ENCODE measurements at regions of chr6 and their contacts with region 1.

Region 1: GRCh38 chr6:104955927-104956730 is 778 bp upstream of the LIN28B start:
- DNase-seq: peak; percentile 77 to 94 (median 80)
- ATAC-seq: peak; percentile 41
- H3K4me3 ChIP-seq: peak overlapping the region; percentile 56
- H3K27ac ChIP-seq: peak overlapping the region; percentile 98
- H3K4me1 ChIP-seq: peaks cover 6 to 8% of the 10 kb centered on the region in 2 experiments; a peak in 4 of 5 replicates
- H3K27me3 ChIP-seq: no peaks in the 10 kb centered on the region
- CTCF ChIP-seq: peak; percentile 10 to 36 (median 22); a peak in 2 of 6 replicates
- EP300 ChIP-seq: peak; percentile 76
- POLR2A ChIP-seq: peak; percentile 71
- RAD21 ChIP-seq: peak; percentile 22 to 44; a peak in 3 of 4 replicates

Region 2: DNA sequence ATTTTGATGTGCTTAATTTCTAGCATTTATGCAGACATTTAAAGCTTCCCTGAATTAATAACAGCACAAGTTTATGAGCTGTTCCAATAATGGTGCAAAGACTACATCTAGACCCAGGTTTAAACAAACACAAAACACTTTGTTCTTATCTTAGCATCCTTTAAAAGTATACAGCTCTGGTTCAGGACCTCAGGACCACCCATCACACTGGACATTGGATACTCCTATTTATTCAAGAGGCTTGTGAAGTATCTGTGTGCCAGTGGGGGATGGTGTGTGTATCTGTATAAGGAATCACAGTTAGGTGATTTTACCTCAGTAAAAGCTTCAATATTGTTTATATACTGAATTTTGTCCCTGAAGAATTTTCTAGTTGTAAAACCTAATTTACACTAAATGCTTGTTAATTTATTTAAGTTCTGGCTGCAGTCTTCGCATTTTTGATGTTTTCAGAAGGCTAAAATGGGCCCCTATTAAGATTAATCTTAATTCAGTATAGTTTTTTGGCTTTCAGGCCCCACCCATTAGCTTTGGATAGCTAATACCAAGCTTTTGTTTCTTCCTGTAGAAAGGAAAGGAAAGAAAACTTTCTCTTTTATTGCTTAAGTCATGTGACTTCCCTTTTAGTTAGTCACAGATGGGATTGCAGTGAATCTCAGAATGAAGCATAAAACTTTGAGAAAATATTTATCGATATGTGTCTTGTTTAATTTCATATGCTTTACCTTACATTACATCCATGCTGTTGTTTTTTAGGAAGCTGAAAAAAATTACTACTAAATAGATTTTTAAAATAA is 13.9 kb after region 1 on chr6:
- CTCF ChIA-PET with region 1: no interaction called
- POLR2A ChIA-PET with region 1: interaction called, 67 read pairs
- in situ Hi-C with region 1: no loop called
- intact Hi-C with region 1: loop called (anchors 2 kb)
- DNase-seq: peak in 1 of 4 experiments; percentile 8
- ATAC-seq: peak; percentile 62
- H3K4me3 ChIP-seq: no peak overlapping the region
- H3K27ac ChIP-seq: peak overlapping the region; percentile 48; the same call in 2 of the 3 replicates
- H3K4me1 ChIP-seq: peaks cover 0 to 13% of the 10 kb centered on the region in 2 experiments; a peak in 1 of 5 replicates
- H3K27me3 ChIP-seq: no peaks in the 10 kb centered on the region
- CTCF ChIP-seq: no peak
- EP300 ChIP-seq: no peak
- POLR2A ChIP-seq: no peak
- RAD21 ChIP-seq: no peak

Region 3: DNA sequence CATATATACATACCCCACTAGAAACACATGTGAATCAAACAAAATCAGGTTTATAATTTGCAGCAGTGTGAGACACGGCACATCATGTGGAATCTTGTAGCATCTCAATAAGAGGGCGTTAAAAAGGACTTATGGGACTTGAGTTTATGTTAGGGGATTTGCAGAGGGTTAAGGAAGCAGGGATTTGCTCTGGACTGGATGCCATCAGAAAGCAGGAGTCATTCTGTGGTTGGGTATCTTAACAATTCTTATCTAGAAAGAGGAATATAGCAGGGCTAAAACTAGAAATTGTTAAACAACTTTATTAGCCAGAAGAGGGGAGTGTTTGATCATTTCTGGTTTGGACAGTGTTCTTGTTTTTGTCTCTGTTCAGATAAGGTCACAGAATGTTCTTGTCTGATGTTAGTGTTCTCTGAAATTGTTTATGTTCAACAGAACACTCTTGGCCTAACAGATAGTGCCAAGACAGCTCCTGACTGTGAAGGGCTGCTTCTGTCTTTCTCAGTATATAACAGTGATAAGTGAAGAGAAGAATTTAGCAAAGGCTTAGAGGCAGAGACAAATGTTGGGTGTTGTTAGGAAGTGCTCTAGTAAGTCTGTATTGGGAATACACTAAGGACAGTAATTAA is 40.0 kb after region 1 on chr6:
- CTCF ChIA-PET with region 1: no interaction called
- POLR2A ChIA-PET with region 1: no interaction called
- in situ Hi-C with region 1: no loop called
- intact Hi-C with region 1: loop called (anchors 5 kb)
- DNase-seq: peak in 2 of 4 experiments; percentile 21 to 44
- ATAC-seq: peak; percentile 88
- H3K4me3 ChIP-seq: no peak overlapping the region
- H3K27ac ChIP-seq: peak overlapping the region; percentile 57; the same call in 2 of the 3 replicates
- H3K4me1 ChIP-seq: peaks cover 0 to 3% of the 10 kb centered on the region in 2 experiments; a peak in 1 of 5 replicates
- H3K27me3 ChIP-seq: no peaks in the 10 kb centered on the region
- CTCF ChIP-seq: peak in 1 of 3 experiments; percentile 53; a peak in 2 of 6 replicates
- EP300 ChIP-seq: no peak; the same call in 1 of the 2 replicates
- POLR2A ChIP-seq: no peak
- RAD21 ChIP-seq: peak; percentile 69 to 79

Region 4: DNA sequence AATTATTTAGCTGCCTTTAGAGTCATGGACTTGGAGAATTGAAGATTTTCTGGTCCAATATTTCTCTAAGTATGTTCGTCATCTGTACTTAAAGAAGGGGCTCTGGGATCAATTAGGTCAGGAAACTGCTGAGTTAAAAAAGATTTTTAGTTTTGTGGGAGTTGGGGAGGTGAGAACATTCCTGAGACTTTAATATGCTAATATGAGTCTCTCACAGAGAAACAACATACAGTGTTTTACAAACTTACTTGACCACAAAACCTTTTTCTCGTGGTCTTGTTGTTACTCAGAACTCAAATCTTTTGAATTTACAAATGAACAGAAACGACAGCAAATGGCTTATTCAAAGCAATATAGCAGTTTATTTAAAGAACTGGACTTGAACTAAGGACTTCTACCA is 68.7 kb after region 1 on chr6:
- CTCF ChIA-PET with region 1: no interaction called
- POLR2A ChIA-PET with region 1: no interaction called
- in situ Hi-C with region 1: no loop called
- intact Hi-C with region 1: no loop called
- DNase-seq: no peak
- ATAC-seq: no peak
- H3K4me3 ChIP-seq: no peak overlapping the region
- H3K27ac ChIP-seq: no peak overlapping the region
- H3K4me1 ChIP-seq: no peaks in the 10 kb centered on the region
- H3K27me3 ChIP-seq: no peaks in the 10 kb centered on the region
- CTCF ChIP-seq: no peak
- EP300 ChIP-seq: no peak
- POLR2A ChIP-seq: no peak
- RAD21 ChIP-seq: no peak